Esophagus squamous epithelium (tissue), 5 donors: ENCODE measurements at regions of chr3 and their contacts with region 1.

Region 1: GRCh38 chr3:180989291-180990163 is at the start of gene DNAJC19:
- DNase-seq: peak; percentile 72
- H3K4me3 ChIP-seq: peak within 1 kb of the TSS; percentile 71 to 91 (median 84)
- H3K27ac ChIP-seq: peak within 1 kb of the TSS; percentile 88 to 94 (median 93)
- H3K4me1 ChIP-seq: peaks cover 14 to 36% (median 14%) of the 10 kb centered on the region in 3 donors
- H3K27me3 ChIP-seq: no peaks in the 10 kb centered on the region
- CTCF ChIP-seq: peak in 2 of 6 experiments; percentile 6 to 23
- POLR2A ChIP-seq: peak in 3 of 4 donors; percentile 77 to 87 (median 81)
- total RNA-seq, gene DNAJC19: 10.0 to 56.6 (median 28.8) TPM

Region 2: DNA sequence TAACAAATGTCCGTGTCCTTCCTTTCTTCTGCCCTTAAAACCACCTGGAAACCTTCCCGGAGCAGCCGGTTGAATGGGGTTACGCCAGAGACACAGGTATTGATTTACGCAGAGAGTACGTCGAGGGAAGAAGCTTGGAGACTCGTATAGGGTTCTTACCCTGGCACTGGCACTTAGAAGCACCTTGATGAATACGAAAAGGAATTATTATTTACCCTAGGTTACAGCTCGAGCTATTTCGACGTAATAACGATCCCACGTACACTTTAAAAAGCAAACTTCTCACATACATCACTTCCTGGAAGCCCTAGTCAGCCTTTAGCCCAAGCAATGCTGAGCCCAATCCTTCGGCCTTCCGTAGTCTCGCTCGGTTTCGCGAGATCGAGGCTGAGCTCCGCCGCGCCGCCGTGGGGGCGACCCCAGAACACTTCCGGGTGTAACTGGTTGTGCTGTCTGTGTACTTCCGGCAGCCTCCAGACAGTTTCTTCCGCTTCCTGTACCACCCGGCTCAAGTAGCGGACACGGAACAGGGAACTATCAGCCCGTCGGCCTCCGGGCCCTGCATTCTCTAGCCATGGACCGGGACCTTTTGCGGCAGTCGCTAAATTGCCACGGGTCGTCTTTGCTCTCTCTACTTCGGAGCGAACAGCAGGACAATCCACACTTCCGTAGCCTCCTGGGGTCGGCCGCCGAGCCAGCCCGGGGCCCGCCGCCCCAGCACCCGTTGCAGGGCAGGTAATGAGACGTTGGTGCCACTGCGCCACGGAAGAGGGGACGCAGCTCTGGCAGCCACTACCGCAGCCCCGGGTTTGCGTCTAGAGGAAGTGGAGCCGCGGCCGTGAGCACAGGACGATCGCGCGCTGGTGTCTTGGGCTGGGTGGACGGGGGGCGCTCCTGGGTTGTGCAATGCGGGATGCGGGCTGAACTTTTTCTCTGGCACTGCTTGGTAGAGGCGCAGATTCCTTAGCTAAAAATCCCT is 387.6 kb before region 1 on chr3 and contains the start of gene TTC14:
- intact Hi-C with region 1: no loop called
- DNase-seq: peak; percentile 78
- H3K4me3 ChIP-seq: peak within 1 kb of the TSS; percentile 50 to 97 (median 79)
- H3K27ac ChIP-seq: peak within 1 kb of the TSS; percentile 74 to 90 (median 84)
- H3K4me1 ChIP-seq: peaks cover 0 to 18% (median 7%) of the 10 kb centered on the region in 3 donors
- H3K27me3 ChIP-seq: peaks cover 0 to 12% (median 0%) of the 10 kb centered on the region in 4 donors
- CTCF ChIP-seq: no peak
- POLR2A ChIP-seq: peak in 1 of 4 donors; percentile 44
- total RNA-seq, gene TTC14: 9.6 to 29.4 (median 21.8) TPM

Region 3: DNA sequence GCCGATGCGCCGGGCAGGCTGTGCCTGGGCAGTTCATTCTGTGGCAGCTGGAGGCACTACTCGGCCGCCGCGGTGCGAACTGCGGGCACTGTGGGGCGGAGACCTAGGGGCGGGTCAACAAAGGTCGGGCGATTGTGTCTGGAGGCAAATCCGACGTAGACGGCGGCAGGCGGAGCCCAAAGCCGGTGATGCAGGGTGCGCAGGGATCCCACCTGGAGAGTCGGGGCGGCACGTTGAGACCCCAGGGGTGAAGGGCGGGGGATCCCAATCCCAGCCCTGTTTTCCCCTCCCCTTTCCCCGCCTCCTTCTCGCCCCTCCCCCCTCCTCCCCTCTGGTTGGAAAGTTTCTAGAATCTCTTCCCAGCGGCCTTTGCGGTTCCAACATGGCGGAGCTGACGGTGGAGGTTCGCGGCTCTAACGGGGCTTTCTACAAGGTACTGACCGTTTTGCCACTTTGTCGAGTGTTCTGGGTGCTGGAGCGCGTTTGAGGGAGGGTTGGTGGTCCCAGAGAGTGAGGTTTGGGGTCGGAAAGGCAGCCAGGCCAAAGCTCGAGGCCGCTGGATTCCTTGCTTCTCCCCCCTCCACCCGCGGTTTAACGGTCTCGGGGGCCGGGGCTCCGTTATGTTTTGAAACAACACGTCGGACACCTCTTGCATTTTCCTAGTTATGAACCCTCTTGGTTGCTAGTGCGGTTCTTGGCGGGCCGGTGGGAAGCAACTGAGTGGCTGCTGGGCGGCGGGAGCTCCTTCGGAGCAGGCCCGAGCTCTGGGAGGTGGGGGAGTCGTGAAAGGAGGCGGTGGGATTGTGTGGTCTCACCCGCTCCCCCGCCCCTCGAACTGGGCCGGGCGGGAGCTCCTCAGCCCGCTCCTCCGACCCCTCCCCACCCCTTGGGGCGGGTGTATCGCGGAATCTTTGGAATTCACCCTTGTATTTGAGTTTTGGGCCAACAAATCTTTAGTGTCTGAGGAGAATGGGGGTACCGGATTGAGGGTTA is 76.9 kb before region 1 on chr3 and contains the start of gene FXR1:
- intact Hi-C with region 1: loop called (anchors 10 kb)
- DNase-seq: peak; percentile 80
- H3K4me3 ChIP-seq: peak within 1 kb of the TSS; percentile 84 to 97 (median 91)
- H3K27ac ChIP-seq: peak within 1 kb of the TSS; percentile 88 to 97 (median 92)
- H3K4me1 ChIP-seq: peaks cover 9 to 53% (median 14%) of the 10 kb centered on the region in 3 donors
- H3K27me3 ChIP-seq: no peaks in the 10 kb centered on the region
- CTCF ChIP-seq: peak; percentile 64 to 88 (median 79)
- POLR2A ChIP-seq: peak in 1 of 4 donors; percentile 56
- total RNA-seq, gene FXR1: 39.6 to 99.2 (median 73.8) TPM

Region 4: DNA sequence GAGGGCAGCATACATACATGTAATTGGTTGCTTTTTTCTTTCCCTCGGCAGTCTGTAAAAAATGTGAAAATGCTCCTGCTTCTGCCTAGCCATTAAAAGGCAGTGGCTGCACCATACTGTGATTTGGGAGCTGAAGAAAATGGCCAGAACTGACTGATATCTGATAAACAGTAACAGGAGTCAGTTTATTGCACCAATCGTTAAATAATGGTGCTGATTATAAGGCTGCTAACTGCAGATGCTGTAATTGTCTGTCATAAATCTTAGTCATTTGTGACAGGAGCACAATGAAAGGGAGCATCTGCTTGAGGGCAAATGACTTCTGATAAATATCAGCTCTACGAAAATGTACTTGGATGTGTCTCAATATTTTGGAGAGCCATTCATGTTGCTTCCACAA is 263.1 kb after region 1 on chr3:
- intact Hi-C with region 1: no loop called
- DNase-seq: no peak
- H3K4me3 ChIP-seq: no peak overlapping the region
- H3K27ac ChIP-seq: no peak overlapping the region
- H3K4me1 ChIP-seq: no peaks in the 10 kb centered on the region
- H3K27me3 ChIP-seq: no peaks in the 10 kb centered on the region
- CTCF ChIP-seq: no peak
- POLR2A ChIP-seq: no peak

Region 5: DNA sequence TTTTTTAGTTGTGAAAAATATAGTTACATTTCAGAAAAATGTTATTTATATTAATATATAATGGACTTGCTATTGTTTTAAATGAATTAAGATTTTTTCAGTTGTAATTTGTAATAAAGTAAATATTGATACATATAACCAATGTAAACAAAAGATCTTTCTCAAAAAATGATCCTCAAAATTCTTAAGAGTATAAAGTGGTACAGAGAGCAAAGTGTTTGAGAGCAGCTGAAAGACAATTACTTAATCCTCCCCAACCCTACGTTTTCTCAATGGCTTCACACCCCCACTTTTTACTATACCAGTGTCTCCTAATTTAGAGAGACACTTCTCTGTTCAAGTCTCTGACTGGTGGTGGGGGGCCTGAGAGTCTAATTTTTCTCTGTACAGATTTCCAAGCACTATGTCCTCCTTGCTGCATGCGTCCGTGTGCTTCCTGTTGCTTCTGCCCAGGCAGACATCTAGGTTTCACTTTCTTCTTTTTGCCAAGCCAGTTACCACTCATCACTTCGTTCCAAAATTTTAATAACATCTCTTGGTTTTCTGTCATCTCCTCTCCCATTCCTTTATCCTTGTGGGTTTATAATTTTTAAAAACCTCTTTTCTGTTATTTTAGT is 276.3 kb after region 1 on chr3:
- intact Hi-C with region 1: no loop called
- DNase-seq: no peak
- H3K4me3 ChIP-seq: peak overlapping the region in 3 of 4 donors; percentile 2 to 43 (median 6)
- H3K27ac ChIP-seq: no peak overlapping the region
- H3K4me1 ChIP-seq: no peaks in the 10 kb centered on the region
- H3K27me3 ChIP-seq: no peaks in the 10 kb centered on the region
- CTCF ChIP-seq: no peak
- POLR2A ChIP-seq: no peak